Activated CD4-positive, alpha-beta memory T cell treated with anti-CD3 and anti-CD28 coated beads for 36 hours (primary cell): ENCODE measurements at regions of chr1 and their contacts with region 1.

Region 1: DNA sequence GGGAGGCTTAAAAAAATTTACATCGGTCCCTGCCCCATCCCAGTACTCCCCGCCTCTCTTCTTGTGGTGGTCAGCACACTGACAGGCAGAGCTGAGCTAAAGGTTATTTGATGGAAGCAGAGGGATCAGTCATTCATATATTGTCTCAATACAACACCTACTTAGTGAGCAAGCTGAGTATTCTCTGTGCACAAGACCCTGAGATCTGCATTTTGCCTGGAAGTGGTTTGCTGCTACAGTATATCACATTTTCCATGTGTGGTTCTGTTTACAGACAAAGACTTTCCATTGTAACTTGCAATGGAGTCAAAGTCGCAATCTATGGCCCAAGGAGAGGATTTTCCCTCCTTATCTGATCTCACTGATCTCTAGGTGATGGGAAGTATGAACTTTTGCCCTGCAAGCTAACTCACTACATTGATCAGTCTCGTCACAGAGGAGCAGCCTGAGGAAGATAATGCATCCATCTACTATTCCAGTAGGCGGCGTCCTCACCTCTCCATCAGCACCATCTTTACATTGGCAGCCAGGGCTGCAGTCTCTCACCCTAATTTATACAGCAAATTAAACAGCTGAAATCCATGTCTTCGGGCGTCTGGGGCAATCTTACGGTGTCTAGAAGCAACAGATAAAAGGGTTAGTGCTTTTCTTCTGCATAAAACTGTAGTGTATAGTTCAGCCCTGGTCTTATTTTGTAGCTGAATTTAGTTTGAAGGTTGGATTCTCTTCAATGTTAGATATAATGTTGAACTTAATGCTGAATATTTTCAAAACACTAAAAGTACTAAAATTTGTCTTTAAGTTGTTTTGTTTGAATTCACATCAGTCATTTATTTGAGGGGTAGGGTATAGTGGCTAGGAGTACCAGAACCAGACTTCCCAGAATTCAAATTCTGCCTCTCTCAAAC is 3.2 kb upstream of the TRAF5 start:
- DNase-seq: peak; percentile 78
- H3K4me3 Mint-ChIP-seq: no peak overlapping the region
- H3K27ac Mint-ChIP-seq: peak overlapping the region; percentile 68
- H3K4me1 Mint-ChIP-seq: peaks cover 55% of the 10 kb centered on the region
- H3K27me3 Mint-ChIP-seq: no peaks in the 10 kb centered on the region

Region 2: DNA sequence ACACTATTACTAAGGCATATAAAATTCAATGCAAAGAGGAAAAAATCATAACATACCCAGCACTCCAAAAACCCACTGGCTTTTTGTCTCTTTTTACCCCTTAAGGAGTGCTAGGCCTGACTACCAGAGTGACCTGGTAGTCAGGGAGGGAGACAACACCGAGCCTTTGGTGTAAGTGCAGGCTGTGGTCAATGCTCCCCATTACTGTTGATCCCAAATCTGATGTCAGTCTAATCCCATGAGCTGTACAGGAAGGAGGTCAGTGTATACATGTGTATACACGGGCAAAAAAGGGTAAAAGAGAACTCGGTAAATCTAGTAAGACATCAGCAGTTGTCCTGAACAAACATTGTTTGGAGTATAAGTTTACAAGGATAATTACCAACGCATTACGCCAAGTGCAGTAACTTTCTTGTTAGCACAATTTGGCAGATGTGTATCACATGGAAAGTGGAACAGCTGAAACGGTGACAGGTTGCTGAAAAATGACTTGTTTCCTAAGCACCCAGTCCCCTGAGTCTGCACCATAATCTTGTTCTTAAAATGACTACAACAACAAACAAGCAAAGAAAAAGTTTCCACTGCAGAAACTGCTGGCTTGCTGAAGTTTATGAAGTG is 407.4 kb before region 1 on chr1:
- CTCF ChIA-PET with region 1: no interaction called
- POLR2A ChIA-PET with region 1: no interaction called
- intact Hi-C with region 1: no loop called
- DNase-seq: no peak
- H3K4me3 Mint-ChIP-seq: no peak overlapping the region
- H3K27ac Mint-ChIP-seq: no peak overlapping the region
- H3K4me1 Mint-ChIP-seq: no peaks in the 10 kb centered on the region
- H3K27me3 Mint-ChIP-seq: peaks cover 3% of the 10 kb centered on the region

Region 3: DNA sequence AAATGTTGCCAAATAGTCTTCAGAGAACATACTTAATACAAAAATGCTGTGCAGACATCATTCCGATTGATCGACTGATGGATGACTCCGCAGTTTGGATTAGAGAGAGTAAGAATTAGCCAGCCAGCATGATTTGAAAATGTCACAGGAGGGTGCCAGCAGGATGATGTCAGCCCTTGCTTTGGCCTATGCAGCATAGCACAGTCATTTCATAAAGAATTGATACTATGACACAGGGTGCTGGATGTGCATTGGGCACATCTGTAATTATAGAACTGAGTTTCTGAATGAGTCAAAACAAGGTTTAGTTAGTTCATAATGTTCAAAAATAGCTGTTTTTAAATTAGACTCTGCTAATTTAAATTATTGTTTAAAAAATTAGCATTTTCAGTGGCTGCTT is 18.4 kb before region 1 on chr1:
- CTCF ChIA-PET with region 1: interaction called, 4 read pairs
- POLR2A ChIA-PET with region 1: interaction called, 4 read pairs
- intact Hi-C with region 1: loop called (anchors 1 kb)
- DNase-seq: peak; percentile 76
- H3K4me3 Mint-ChIP-seq: no peak overlapping the region
- H3K27ac Mint-ChIP-seq: peak overlapping the region; percentile 77
- H3K4me1 Mint-ChIP-seq: peaks cover 44% of the 10 kb centered on the region
- H3K27me3 Mint-ChIP-seq: no peaks in the 10 kb centered on the region

Region 4: DNA sequence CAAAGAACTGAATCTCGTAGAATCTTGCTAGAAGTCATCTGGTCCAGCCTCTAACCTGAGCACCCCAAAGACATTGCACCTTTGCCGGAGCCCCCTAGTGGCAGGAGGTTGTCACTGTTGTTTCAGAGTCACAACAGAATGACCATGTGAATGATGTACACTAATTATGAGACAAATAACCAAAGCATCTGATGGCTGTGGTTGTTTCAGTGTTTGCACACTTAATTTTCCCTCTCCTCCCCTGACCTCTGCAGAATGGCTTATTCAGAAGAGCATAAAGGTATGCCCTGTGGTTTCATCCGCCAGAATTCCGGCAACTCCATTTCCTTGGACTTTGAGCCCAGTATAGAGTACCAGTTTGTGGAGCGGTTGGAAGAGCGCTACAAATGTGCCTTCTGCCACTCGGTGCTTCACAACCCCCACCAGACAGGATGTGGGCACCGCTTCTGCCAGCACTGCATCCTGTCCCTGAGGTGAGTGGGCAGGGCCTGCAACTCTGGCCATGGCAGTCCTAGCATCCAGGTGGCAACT is 29.6 kb after region 1 on chr1:
- CTCF ChIA-PET with region 1: interaction called, 23 read pairs
- POLR2A ChIA-PET with region 1: no interaction called
- intact Hi-C with region 1: loop called (anchors 1 kb)
- DNase-seq: peak; percentile 75
- H3K4me3 Mint-ChIP-seq: peak overlapping the region; percentile 16
- H3K27ac Mint-ChIP-seq: peak overlapping the region; percentile 88
- H3K4me1 Mint-ChIP-seq: peaks cover 79% of the 10 kb centered on the region
- H3K27me3 Mint-ChIP-seq: no peaks in the 10 kb centered on the region

Region 5: GRCh38 chr1:211420389-211420788 is 97.0 kb after region 1 on chr1:
- CTCF ChIA-PET with region 1: interaction called, 3 read pairs
- POLR2A ChIA-PET with region 1: no interaction called
- intact Hi-C with region 1: loop called (anchors 2 kb)
- DNase-seq: peak; percentile 36
- H3K4me3 Mint-ChIP-seq: no peak overlapping the region
- H3K27ac Mint-ChIP-seq: no peak overlapping the region
- H3K4me1 Mint-ChIP-seq: peaks cover 19% of the 10 kb centered on the region
- H3K27me3 Mint-ChIP-seq: no peaks in the 10 kb centered on the region

Region 6: GRCh38 chr1:211476200-211476849 is 152.9 kb after region 1 on chr1:
- CTCF ChIA-PET with region 1: interaction called, 41 read pairs
- POLR2A ChIA-PET with region 1: interaction called, 3 read pairs
- intact Hi-C with region 1: loop called (anchors 1 kb)
- DNase-seq: peak; percentile 84
- H3K4me3 Mint-ChIP-seq: no peak overlapping the region
- H3K27ac Mint-ChIP-seq: no peak overlapping the region
- H3K4me1 Mint-ChIP-seq: no peaks in the 10 kb centered on the region
- H3K27me3 Mint-ChIP-seq: peaks cover 15% of the 10 kb centered on the region

Region 7: DNA sequence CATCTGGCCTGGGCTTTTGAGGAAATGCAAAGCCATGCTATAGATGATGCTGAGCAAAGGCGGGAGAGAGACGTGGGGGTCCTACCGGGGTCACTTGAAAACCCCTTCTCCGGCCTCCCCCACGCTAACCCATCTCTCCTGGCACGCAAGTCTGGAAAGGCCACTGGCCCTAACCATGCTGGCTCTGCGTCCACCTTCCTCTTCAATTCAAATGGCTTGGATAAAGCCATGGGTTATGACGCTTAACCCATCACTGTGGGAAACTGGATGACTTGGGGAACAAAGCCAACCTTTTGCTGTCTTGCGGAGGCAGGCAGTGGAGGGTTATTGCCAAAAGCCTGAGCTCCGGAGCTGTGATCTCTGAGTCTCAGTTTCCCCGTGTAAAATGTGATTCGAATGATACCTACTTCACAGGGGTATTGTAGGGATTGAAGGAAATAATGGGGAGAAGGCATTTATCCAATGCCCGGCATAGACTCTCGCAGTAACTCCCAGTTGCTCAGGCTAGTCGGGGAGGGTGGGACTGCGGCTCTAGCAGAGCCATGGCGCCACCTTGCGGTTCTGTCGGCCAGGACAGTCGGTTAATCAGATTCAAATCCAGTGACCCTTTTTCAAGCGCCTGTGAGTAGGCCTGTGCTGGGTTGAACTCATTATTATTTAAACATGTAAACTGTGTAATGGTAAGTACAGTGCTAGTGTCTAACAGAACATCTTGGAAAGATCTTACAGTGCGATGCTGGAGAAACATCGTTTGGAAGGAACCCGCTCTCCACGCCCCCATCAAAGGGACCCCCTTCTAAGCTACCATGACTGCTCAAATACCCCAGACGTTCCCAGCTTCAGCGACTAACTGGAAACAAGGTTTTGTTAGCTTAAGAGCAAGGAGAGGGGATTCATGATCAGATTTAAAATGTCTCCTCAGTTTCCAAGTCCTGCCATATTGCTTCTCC is 331.7 kb after region 1 on chr1:
- CTCF ChIA-PET with region 1: interaction called, 4 read pairs
- POLR2A ChIA-PET with region 1: no interaction called
- intact Hi-C with region 1: loop called (anchors 5 kb)
- DNase-seq: peak; percentile 87
- H3K4me3 Mint-ChIP-seq: no peak overlapping the region
- H3K27ac Mint-ChIP-seq: no peak overlapping the region
- H3K4me1 Mint-ChIP-seq: no peaks in the 10 kb centered on the region
- H3K27me3 Mint-ChIP-seq: no peaks in the 10 kb centered on the region